ENCODE measurements at regions of chr9 and their contacts with region 1.

Region 1: GRCh38 chr9:128863647-128864046 is 18.1 kb downstream of the KYAT1 start:
- DNase-seq: no peak
- H3K4me3 ChIP-seq: no peak overlapping the region
- H3K27ac ChIP-seq: no peak overlapping the region
- H3K27me3 ChIP-seq: no peaks in the 10 kb centered on the region
- CTCF ChIP-seq: peak; percentile 84

Region 2: GRCh38 chr9:128742401-128742800 is 121.2 kb before region 1 on chr9:
- CTCF ChIA-PET with region 1: no interaction called
- POLR2A ChIA-PET with region 1: no interaction called
- DNase-seq: no peak
- H3K4me3 ChIP-seq: no peak overlapping the region
- H3K27ac ChIP-seq: no peak overlapping the region
- H3K27me3 ChIP-seq: no peaks in the 10 kb centered on the region
- CTCF ChIP-seq: no peak

Region 3: GRCh38 chr9:128781187-128782070 is 82.2 kb before region 1 on chr9:
- CTCF ChIA-PET with region 1: no interaction called
- POLR2A ChIA-PET with region 1: no interaction called
- DNase-seq: no peak
- H3K4me3 ChIP-seq: no peak overlapping the region
- H3K27ac ChIP-seq: no peak overlapping the region
- H3K27me3 ChIP-seq: no peaks in the 10 kb centered on the region
- CTCF ChIP-seq: no peak

Region 4: GRCh38 chr9:128877490-128878226 is 14.0 kb after region 1 on chr9:
- CTCF ChIA-PET with region 1: interaction called, 13 read pairs
- POLR2A ChIA-PET with region 1: interaction called, 4 read pairs
- DNase-seq: no peak
- H3K4me3 ChIP-seq: no peak overlapping the region
- H3K27ac ChIP-seq: no peak overlapping the region
- H3K27me3 ChIP-seq: no peaks in the 10 kb centered on the region
- CTCF ChIP-seq: no peak

Measured in AG04450 (cell line).